HEK293T (cell line): ENCODE measurements at regions of chr4 and their contacts with region 1.

Region 1: DNA sequence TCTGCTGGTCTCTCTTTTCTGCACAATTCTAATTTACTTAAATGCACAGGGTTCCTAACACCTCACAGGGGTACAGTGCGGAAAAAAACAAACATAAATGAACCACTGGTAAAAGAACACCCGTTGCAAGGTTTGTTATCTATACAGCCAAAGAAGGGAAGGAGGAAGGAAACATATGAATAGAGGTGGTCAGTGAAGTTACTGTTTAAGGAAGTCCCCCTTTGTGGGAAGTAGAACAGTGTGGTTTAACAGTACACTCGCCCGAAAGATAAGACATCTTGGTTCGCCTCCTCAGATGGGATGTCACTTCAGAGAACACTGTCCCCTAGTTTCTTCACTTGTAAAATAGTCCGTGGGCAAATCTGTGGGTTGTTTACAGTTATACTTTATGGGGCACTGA is 57.5 kb downstream of the TEC start:
- DNase-seq: no peak

Region 2: GRCh38 chr4:48141048-48141447 is 71.1 kb before region 1 on chr4:
- CTCF ChIA-PET with region 1: interaction called, 10 read pairs
- POLR2A ChIA-PET with region 1: no interaction called
- DNase-seq: peak; percentile 14

Region 3: DNA sequence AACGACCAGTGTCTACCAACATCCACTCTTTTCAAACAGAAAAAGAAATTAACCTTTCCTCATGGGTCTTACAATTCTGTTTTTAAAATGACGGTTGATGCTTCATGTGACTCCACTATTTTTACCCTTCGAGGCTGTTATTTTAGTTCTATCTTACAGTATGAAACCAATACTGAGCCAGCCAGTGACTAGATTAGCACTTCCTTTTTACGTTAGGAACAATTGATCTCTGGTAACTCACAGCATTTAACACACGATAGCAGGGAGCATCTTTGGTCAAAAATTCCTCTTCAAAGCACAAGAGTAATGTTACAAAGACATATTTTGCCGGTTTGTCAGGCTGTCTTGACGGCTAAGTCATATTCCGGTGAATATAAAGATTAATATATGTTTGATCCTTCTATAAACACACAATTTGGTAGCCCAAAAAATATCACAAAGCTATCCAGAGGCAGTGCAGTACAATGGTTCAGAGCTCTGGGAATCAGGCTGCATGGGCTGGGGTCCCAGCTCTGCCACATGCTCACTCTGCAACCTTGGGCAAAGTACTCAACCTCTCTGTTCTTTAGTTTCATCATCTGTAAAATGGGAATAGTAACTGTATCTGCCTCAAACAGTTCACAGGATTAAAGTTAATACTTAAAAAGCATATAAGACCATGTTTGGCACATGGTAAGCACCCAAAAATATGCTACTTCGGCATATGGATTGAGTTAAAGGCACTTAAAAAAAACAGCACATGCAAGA is 15.2 kb before region 1 on chr4:
- CTCF ChIA-PET with region 1: no interaction called
- POLR2A ChIA-PET with region 1: no interaction called
- DNase-seq: no peak

Region 4: DNA sequence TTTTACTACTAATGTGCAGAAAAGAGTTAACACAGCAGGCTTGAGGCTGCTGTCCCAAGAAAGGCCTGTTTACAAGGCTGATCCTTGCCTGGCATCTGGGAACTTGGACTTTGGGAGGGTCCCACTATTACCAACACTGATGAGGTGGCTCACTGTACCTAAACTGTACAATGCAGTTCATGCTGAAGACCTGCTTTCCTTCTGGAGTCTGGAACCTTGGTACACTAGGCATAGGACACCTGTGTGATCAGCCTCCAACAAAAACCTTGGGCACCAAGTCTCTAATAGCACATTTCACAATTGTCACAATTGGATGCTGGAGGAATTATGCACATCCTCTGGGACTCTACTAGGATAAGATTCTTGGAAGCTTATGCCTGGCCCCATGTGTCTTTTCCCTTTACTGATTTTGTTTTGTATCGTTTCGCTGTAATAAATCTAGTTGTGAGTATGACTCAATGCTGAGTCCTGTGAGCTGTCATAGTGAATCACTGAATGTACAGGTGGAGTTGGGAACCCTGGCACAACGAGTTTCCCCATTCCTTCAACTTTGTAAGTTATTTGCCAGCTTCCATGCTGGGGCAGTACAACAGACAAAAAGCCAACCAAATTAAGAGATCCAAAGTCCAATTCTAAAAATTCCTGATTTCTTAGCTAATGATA is 11.6 kb after region 1 on chr4:
- CTCF ChIA-PET with region 1: no interaction called
- POLR2A ChIA-PET with region 1: no interaction called
- DNase-seq: no peak